ENCODE measurements at regions of chr3 and their contacts with region 1.

Region 1: GRCh38 chr3:58217209-58217811 is 6.5 kb upstream of the DNASE1L3 start:
- DNase-seq: peak; percentile 44
- H3K4me3 Mint-ChIP-seq: no peak overlapping the region
- H3K27ac Mint-ChIP-seq: no peak overlapping the region
- H3K4me1 Mint-ChIP-seq: peaks cover 45% of the 10 kb centered on the region
- H3K27me3 Mint-ChIP-seq: no peaks in the 10 kb centered on the region

Region 2: GRCh38 chr3:58177747-58178527 is 39.4 kb before region 1 on chr3:
- intact Hi-C with region 1: loop called (anchors 5 kb)
- DNase-seq: peak; percentile 80
- H3K4me3 Mint-ChIP-seq: peak overlapping the region; percentile 74
- H3K27ac Mint-ChIP-seq: no peak overlapping the region
- H3K4me1 Mint-ChIP-seq: peaks cover 18% of the 10 kb centered on the region
- H3K27me3 Mint-ChIP-seq: peaks cover 2% of the 10 kb centered on the region

Region 3: GRCh38 chr3:58188173-58188564 is 29.1 kb before region 1 on chr3:
- intact Hi-C with region 1: loop called (anchors 1 kb)
- DNase-seq: no peak
- H3K4me3 Mint-ChIP-seq: no peak overlapping the region
- H3K27ac Mint-ChIP-seq: no peak overlapping the region
- H3K4me1 Mint-ChIP-seq: peaks cover 3% of the 10 kb centered on the region
- H3K27me3 Mint-ChIP-seq: no peaks in the 10 kb centered on the region

Region 4: DNA sequence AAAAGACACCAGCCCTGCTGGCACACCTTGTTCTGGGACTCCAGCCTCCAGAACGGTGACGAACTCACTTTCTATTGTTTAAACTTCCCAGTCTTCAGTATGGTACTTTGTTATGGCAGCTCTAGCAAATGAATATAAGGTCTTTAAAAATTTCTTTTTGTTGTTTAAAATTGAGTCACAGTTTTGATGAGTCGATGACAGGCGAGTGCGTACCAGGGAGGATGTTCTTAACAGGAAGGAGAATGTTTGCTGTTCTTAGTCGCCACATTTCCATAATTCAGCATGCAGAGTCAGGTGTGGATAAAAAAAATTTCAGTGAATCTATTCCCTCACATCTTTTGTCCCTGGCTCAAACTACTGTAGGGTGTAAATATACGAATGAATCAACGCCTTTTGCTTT is 18.9 kb before region 1 on chr3:
- intact Hi-C with region 1: loop called (anchors 2 kb)
- DNase-seq: no peak
- H3K4me3 Mint-ChIP-seq: no peak overlapping the region
- H3K27ac Mint-ChIP-seq: no peak overlapping the region
- H3K4me1 Mint-ChIP-seq: peaks cover 6% of the 10 kb centered on the region
- H3K27me3 Mint-ChIP-seq: no peaks in the 10 kb centered on the region

Region 5: DNA sequence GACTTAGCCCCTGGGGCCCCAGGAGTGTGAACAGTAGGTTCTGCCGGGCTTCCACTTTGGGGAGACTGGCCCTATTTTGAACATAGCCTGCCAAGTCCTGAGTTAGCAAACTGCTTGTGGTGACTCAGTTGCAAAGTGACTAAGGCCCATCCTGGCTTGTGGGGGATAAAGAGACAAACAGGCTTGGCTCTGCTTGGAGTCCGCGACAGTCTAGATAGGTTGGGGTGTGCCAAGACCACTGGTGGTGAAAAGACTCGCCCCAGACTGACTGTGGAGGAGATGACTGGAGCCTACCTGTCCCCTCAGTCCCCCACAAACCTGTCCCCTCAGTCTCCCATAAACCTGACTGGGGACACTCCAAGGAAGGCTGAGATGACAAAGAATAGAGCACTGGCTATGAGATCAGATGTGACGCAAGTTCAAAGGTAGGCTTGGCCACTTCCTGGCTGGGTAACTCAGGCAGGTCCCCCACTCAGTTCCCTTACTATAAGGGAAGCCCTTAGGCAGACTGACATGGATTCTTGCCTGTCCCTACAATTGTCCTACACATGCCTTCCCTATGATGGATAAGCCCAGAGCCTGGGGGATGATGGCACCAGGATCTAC is 10.8 kb before region 1 on chr3:
- intact Hi-C with region 1: loop called (anchors 1 kb)
- DNase-seq: peak; percentile 13
- H3K4me3 Mint-ChIP-seq: no peak overlapping the region
- H3K27ac Mint-ChIP-seq: peak overlapping the region; percentile 79
- H3K4me1 Mint-ChIP-seq: peaks cover 20% of the 10 kb centered on the region
- H3K27me3 Mint-ChIP-seq: peaks cover 14% of the 10 kb centered on the region

Region 6: DNA sequence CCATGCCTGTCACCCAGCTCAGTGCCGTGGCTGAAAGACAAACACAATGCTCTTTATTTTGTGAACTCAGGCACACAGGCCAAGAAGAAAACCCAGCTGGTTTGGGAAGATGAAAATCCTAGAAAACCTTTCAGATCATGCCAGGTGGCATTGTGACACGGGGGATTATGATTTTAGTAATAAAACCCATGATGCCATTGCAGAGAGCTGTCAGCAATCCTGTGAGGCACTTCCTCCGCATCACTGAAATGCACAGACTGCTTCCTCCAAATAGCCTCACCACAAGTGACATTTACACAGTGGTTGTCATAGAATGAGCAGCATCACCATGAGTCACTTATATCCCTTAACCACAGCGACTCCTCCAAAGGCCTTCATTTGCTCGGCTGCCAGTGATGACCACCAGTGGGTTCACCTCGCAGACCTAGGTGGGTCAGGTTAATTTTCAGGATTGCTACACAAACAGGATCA is 43.0 kb after region 1 on chr3:
- intact Hi-C with region 1: loop called (anchors 2 kb)
- DNase-seq: no peak
- H3K4me3 Mint-ChIP-seq: no peak overlapping the region
- H3K27ac Mint-ChIP-seq: peak overlapping the region; percentile 85
- H3K4me1 Mint-ChIP-seq: peaks cover 43% of the 10 kb centered on the region
- H3K27me3 Mint-ChIP-seq: no peaks in the 10 kb centered on the region

Measured in activated T-helper 2 cell treated with anti-CD3 and anti-CD28 coated beads, Interferon-gamma antibody, Interleukin-2, Interleukin-4, amounts not matched to agents 10 μg/mL and 5 μg/mL and 100 μg/mL, durations not matched to agents 14 hours and 24 hours and 36 hours (primary cell).